HEK293 (cell line): ENCODE measurements at regions of chr2 and their contacts with region 1.

Region 1: DNA sequence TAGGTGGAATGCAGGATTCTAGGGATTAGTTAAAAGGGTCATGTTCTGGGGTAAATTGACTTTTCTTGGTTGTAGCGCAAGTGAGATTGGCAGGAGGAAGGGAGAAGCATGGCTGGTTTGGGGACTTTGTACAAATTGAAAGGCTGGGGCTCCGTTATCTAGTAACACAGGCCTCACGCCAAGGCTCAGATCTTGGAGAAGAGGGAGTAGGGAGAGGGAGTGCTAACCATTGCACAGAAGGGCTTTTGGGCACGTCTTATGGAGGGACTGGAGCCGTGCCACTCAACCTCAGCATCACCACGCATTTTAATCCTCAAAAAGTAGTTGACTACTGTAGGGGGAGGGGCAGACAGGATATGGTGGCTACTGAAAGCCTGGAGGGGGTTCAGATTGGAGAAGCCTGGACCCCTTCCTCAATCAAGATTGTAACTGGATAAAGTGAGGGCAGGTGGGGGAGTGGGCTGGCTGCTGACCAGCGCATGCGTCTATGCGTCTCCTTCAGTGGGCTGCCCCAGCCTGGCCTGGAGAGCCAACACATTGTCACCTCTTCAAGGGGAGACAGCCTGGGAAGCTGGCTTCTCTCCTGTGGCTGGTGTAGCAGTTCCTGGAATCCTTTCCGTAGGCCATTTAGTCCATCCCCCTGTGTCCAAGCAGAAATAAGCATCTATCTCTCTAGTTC is 14.3 kb downstream of the IGFBP5 start:
- H3K4me3 ChIP-seq: no peak overlapping the region
- H3K27ac ChIP-seq: no peak overlapping the region
- H3K4me1 ChIP-seq: peaks cover 5% of the 10 kb centered on the region
- CTCF ChIP-seq: no peak

Region 2: GRCh38 chr2:216692636-216693413 is 11.7 kb after region 1 on chr2:
- CTCF ChIA-PET with region 1: interaction called, 16 read pairs
- POLR2A ChIA-PET with region 1: interaction called, 5 read pairs
- H3K4me3 ChIP-seq: peak overlapping the region; percentile 56
- H3K27ac ChIP-seq: peak overlapping the region; percentile 92
- H3K4me1 ChIP-seq: peaks cover 36% of the 10 kb centered on the region
- CTCF ChIP-seq: no peak

Region 3: DNA sequence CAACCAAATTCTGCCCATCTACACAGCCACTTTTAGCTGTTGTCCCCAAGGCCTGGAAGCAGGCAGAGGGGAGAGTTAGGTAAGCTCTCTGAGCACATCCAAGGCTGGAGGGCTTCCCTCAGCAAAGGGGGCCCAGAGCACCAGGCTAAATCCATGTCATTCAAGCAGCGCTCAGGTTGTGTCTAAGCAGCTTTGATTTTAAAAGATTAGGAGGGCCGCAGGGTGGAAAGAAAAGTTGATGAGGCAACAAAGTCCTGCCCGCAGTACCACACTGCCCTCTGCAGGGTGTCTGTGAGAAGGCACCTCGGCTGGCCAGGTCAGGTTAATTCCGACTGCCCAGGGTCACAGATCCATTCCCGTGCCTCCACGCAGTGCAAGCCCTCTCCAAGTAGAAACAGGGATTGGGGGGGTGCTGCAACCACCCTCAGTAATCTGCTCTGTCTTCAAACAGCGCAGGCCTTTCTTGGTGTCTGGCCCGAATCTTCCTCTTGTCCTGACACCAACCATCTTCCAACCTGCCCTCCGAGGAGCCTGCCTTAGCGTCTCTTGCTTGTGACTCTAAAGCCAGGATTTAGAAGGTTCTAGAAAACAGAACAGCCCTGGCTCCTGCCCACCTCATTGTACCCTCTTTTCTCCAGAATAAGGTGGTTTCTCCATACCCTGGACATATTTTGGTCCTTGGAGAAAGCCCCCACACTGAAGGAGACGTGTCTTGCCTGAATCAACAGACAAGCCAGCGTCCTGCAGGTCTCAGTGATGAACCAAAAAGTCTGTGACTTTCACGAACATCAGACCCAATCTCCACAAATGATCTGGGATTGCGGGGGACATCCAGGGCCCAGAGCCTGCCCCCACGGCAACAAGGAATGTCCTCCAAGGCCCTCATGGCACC is 1032.6 kb after region 1 on chr2:
- CTCF ChIA-PET with region 1: interaction called, 21 read pairs
- POLR2A ChIA-PET with region 1: no interaction called
- H3K4me3 ChIP-seq: no peak overlapping the region
- H3K27ac ChIP-seq: no peak overlapping the region
- H3K4me1 ChIP-seq: no peaks in the 10 kb centered on the region
- CTCF ChIP-seq: peak; percentile 88